ENCODE measurements at regions of chr4 and their contacts with region 1.

Region 1: GRCh38 chr4:145609481-145610427 is 9.4 kb upstream of the MMAA start:
- DNase-seq: peak; percentile 78
- H3K4me3 Mint-ChIP-seq: no peak overlapping the region
- H3K27ac Mint-ChIP-seq: no peak overlapping the region
- H3K4me1 Mint-ChIP-seq: peaks cover 4% of the 10 kb centered on the region
- H3K27me3 Mint-ChIP-seq: peaks cover 11% of the 10 kb centered on the region

Region 2: DNA sequence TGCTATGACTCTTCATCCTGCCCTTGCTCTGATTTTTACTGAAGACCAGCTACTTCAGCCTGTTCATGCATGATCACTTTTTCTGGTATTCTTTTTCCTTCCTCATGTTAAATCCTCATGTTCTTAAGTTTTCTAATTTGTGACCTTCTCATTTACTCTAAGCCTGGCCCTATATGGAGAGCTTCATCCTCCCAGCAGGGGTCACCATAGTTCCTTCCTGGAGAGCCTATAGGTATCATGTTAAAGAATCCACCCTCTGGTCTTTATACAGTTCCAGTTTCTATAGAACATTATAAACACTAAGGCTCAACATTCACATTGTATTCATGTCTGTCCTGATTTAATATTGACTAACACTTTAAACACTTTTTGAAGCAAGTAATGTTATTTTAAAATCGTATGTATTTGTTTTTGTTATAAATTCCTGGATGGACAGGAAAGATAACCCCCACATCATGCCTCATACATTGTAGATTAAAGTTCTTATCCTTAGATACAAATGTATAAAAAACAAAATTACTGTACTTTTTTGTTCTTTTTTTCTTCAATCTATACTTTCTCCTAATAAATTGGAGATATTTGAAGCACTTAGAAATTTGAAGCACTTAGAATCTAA is 375.6 kb before region 1 on chr4:
- CTCF ChIA-PET with region 1: interaction called, 17 read pairs
- DNase-seq: peak; percentile 67
- H3K4me3 Mint-ChIP-seq: no peak overlapping the region
- H3K27ac Mint-ChIP-seq: no peak overlapping the region
- H3K4me1 Mint-ChIP-seq: no peaks in the 10 kb centered on the region
- H3K27me3 Mint-ChIP-seq: peaks cover 10% of the 10 kb centered on the region

Region 3: DNA sequence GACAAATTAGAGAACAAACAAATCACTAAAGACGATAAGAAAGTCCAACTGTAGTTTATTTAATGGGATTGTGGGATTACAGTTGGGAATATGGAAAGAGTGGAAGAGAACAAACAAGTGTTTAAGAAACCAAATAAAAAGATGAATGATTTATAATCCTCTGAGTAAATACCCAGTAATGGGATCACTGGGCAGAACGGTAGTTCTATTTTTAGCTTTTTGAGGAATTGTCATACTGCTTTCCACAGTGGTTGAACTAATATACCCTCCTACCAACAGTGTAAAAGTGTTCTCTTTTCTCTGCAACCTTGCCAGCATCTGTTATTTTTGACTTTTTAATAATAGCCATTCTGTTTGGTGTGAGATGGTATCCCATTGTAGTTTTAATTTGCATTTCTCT is 85.2 kb after region 1 on chr4:
- CTCF ChIA-PET with region 1: no interaction called
- DNase-seq: no peak
- H3K4me3 Mint-ChIP-seq: no peak overlapping the region
- H3K27ac Mint-ChIP-seq: no peak overlapping the region
- H3K4me1 Mint-ChIP-seq: no peaks in the 10 kb centered on the region
- H3K27me3 Mint-ChIP-seq: peaks cover 4% of the 10 kb centered on the region

Region 4: DNA sequence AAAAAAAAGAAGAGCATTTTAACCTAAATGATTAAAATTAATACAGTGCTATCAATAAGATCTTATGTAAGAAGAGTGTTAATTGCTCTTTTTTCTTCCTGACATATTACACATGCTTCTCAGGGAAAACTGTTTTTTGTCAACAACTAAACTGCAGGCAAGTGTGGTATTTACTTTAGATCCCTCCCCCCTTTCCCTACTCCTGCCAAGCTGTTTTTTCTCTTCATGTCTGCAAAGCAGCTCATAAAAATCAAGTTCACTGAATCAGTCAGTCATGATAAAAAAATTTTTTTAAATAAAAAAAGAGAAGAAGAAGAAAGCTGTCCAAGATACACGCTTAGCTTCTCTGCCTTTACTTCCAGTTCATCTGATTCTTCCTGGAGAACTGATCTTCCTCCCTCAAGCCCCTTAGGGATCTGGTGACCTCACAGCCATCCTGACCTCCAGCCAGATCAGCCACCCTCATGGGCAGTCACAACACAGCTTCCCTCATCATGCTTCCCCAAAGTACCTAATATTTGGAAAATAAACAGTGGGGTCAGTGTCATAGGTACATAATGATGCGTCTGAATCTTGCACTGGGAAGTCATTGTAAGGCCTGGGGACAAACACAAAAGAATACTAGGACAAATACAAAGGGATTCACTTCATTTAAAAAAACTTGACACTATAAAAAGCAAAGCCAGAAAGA is 241.9 kb after region 1 on chr4:
- CTCF ChIA-PET with region 1: no interaction called
- DNase-seq: no peak
- H3K4me3 Mint-ChIP-seq: no peak overlapping the region
- H3K27ac Mint-ChIP-seq: no peak overlapping the region
- H3K4me1 Mint-ChIP-seq: no peaks in the 10 kb centered on the region
- H3K27me3 Mint-ChIP-seq: no peaks in the 10 kb centered on the region